ENCODE measurements at regions of chr22 and their contacts with region 1.

Region 1: DNA sequence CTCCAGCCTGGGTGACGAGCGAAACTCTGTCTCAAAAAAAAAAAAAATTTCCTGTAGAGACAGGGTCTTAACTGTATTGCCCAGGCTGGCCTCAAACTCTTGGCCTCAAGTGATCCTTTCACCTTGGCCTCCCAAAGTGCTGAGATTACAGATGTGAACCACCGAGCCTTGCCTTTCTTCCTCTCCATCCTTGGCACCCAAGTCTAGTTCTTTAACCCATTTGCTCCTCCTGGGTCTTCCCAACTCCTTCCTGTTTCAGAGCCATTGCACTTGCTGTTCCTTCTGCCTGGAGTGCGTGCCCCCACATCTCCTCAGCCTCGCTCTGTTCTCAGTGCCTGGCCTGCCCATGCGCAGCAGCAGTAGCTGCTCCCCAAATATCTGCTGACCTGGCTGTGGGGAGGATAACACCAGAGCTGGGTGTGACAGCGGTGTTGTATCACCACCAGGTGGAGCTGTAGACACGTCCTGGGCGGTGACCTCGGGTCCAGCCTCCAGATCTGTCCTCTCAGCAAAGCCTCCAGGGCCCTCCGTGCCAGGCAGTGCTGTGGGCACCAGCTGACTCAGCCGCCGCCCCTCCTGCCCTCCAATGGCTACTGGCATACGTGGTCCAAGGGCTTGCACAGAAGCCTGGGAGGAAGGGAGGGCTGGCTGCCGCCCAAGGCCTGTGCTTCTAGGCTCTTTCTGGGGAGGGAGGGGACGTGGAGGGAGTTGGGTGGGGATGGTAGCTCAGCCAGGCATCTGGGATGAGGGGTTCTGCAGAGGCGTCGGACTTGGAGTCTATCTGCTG is 22.0 kb downstream of the TEF start:
- DNase-seq: peak; percentile 88
- ATAC-seq: peak; percentile 97
- H3K4me3 Mint-ChIP-seq: no peak overlapping the region
- H3K27ac Mint-ChIP-seq: peak overlapping the region; percentile 63; the same call in 1 of the 2 replicates
- H3K4me1 Mint-ChIP-seq: peaks cover 2% of the 10 kb centered on the region; the same call in 1 of the 2 replicates
- H3K27me3 Mint-ChIP-seq: no peaks in the 10 kb centered on the region
- CTCF ChIP-seq: peak; percentile 85

Region 2: GRCh38 chr22:41417622-41418390 is 14.1 kb after region 1 on chr22:
- CTCF ChIA-PET with region 1: interaction called, 10 read pairs
- POLR2A ChIA-PET with region 1: no interaction called
- DNase-seq: no peak
- ATAC-seq: no peak
- H3K4me3 Mint-ChIP-seq: no peak overlapping the region
- H3K27ac Mint-ChIP-seq: peak overlapping the region; percentile 24; the same call in 1 of the 2 replicates
- H3K4me1 Mint-ChIP-seq: peaks cover 9% of the 10 kb centered on the region
- H3K27me3 Mint-ChIP-seq: no peaks in the 10 kb centered on the region
- CTCF ChIP-seq: no peak

Region 3: GRCh38 chr22:41448189-41448808 is 44.6 kb after region 1 on chr22:
- CTCF ChIA-PET with region 1: interaction called, 20 read pairs
- POLR2A ChIA-PET with region 1: interaction called, 10 read pairs
- DNase-seq: peak; percentile 94
- ATAC-seq: peak; percentile 74
- H3K4me3 Mint-ChIP-seq: peak overlapping the region; percentile 96
- H3K27ac Mint-ChIP-seq: peak overlapping the region; percentile 99
- H3K4me1 Mint-ChIP-seq: peaks cover 13% of the 10 kb centered on the region
- H3K27me3 Mint-ChIP-seq: no peaks in the 10 kb centered on the region
- CTCF ChIP-seq: no peak

Region 4: DNA sequence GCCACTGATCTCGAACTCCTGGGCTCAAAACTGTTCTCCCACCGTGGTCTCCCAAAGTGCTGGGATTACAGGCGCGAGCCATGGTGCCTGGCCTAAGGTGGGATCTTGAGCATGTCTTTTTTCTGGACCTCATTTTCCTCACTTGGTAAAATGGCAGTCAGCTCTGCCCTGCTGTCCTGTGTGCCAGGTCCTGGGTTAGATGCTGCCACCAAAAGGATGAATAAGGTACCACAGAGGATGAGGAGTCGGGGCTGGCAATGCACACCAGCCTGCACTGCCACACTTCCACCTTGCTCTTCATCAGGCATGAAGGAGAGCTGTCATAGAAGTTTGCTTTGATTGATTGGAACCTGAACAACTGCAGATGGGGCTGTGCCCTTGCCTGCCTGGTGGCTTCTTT is 97.5 kb after region 1 on chr22:
- CTCF ChIA-PET with region 1: interaction called, 39 read pairs
- POLR2A ChIA-PET with region 1: no interaction called
- DNase-seq: no peak
- ATAC-seq: peak; percentile 78
- H3K4me3 Mint-ChIP-seq: no peak overlapping the region
- H3K27ac Mint-ChIP-seq: no peak overlapping the region
- H3K4me1 Mint-ChIP-seq: no peaks in the 10 kb centered on the region
- H3K27me3 Mint-ChIP-seq: no peaks in the 10 kb centered on the region
- CTCF ChIP-seq: no peak

Region 5: DNA sequence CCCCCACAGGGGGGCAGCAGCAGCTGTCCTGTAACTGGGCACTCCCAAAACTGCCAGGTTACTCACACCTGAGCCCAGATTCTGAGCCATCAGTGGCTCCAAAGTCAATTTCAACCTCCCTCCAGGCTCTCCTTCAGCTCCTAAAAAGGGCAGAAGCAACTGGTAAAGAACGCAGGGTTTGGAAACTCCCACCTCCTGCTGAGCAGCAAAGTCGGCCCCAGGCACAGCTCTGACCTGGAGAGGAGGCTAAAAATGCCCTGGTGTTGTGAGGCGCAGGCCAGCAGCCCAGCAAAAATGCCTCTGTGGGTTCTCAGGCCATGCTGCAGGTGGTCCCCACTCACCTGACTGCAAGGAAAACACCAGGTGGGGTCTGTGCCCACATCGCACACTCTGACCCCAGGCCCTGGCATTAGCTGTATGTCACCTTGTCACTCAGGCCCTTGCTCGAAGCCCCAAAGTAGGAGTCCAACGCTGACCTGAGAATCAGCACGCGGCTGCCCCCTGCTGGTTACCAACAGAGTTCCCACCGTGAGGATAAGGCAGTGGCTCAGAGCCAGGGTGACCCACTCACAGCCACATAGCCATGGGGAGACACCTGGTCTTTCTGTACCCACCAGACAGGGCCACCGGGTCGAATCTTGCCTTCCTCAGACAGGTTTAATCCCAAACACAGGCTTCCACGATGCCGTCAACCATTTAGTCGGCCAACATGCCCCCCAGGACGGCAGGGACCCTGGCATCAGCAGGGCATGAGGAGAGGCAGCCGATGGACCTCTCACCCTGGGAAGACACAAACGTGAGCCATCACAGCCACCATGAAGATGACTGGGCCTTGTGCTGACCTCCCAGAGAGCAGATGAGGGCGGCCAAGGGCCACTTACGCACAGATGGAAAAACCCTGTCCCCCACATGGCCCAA is 129.4 kb after region 1 on chr22:
- CTCF ChIA-PET with region 1: interaction called, 71 read pairs
- POLR2A ChIA-PET with region 1: interaction called, 6 read pairs
- DNase-seq: peak; percentile 87
- ATAC-seq: peak; percentile 79
- H3K4me3 Mint-ChIP-seq: no peak overlapping the region
- H3K27ac Mint-ChIP-seq: peak overlapping the region; percentile 82
- H3K4me1 Mint-ChIP-seq: peaks cover 11% of the 10 kb centered on the region
- H3K27me3 Mint-ChIP-seq: no peaks in the 10 kb centered on the region
- CTCF ChIP-seq: peak; percentile 74

Region 6: GRCh38 chr22:41596776-41597634 is 193.3 kb after region 1 on chr22:
- CTCF ChIA-PET with region 1: interaction called, 11 read pairs
- POLR2A ChIA-PET with region 1: interaction called, 3 read pairs
- DNase-seq: peak; percentile 79
- ATAC-seq: peak; percentile 95
- H3K4me3 Mint-ChIP-seq: no peak overlapping the region
- H3K27ac Mint-ChIP-seq: no peak overlapping the region
- H3K4me1 Mint-ChIP-seq: no peaks in the 10 kb centered on the region
- H3K27me3 Mint-ChIP-seq: peaks cover 16% of the 10 kb centered on the region; the same call in 1 of the 2 replicates
- CTCF ChIP-seq: peak; percentile 84